CD14-positive monocyte (primary cell): ENCODE measurements at regions of chr12 and their contacts with region 1.

Region 1: DNA sequence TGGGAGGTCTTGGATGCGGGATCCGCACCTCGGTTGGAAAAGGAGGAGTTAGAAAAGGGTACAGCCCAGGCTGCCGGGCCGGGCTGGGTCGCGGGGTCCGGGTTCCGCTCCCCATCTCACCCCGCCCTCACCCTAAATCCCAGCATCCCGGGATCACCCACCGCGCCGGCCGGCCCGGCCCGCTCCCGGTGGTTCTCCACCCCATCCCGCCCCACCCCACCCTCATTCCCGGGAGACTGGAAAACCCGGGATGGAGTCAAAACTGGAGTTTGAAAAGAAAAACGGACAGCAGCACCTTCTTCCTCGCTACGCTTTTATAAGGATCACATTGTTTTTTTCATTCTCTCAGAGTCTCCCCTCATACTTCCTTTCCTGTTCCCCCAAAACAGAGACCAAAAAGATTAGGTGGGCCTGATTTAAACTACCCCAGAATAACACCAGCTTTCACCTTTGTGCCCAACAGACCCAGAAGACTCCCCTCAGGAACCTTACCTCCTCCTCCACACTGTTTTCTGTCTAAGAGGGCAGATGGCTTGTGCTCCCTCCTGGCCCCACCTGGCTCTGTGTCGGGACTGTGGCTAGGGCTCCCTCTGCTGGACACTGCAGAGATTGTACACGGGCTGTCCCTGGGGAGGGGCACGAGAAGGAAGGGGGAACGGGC is 2.8 kb downstream of the GLI1 start:
- DNase-seq: peak; percentile 70 to 77 (median 71)
- H3K4me3 ChIP-seq: peak overlapping the region; percentile 18 to 75 (median 44)
- H3K4me3 Mint-ChIP-seq: peak overlapping the region; percentile 78 to 97
- H3K27ac ChIP-seq: no peak overlapping the region
- H3K27ac Mint-ChIP-seq: peak overlapping the region in 5 of 7 donors; percentile 60 to 86 (median 72)
- H3K4me1 ChIP-seq: peaks cover 42 to 59% of the 10 kb centered on the region in 2 donors
- H3K4me1 Mint-ChIP-seq: peaks cover 57% of the 10 kb centered on the region
- H3K27me3 ChIP-seq: peaks cover 15 to 26% of the 10 kb centered on the region in 2 donors
- H3K27me3 Mint-ChIP-seq: peaks cover 44 to 57% (median 48%) of the 10 kb centered on the region in 3 donors
- CTCF ChIP-seq: peak; percentile 89

Region 2: GRCh38 chr12:56931474-56931978 is 530.9 kb before region 1 on chr12:
- intact Hi-C with region 1: loop called (anchors 2 to 5 kb)
- DNase-seq: peak; percentile 58 to 71 (median 67)
- H3K4me3 ChIP-seq: peak overlapping the region in 1 of 3 experiments; percentile 62
- H3K4me3 Mint-ChIP-seq: peak overlapping the region; percentile 55 to 71
- H3K27ac ChIP-seq: peak overlapping the region; percentile 56 to 73
- H3K27ac Mint-ChIP-seq: peak overlapping the region; percentile 80 to 93 (median 89)
- H3K4me1 ChIP-seq: peaks cover 33 to 45% of the 10 kb centered on the region in 2 donors
- H3K4me1 Mint-ChIP-seq: peaks cover 52% of the 10 kb centered on the region
- H3K27me3 ChIP-seq: no peaks in the 10 kb centered on the region
- H3K27me3 Mint-ChIP-seq: peaks cover 0 to 3% (median 2%) of the 10 kb centered on the region in 3 donors
- CTCF ChIP-seq: no peak

Region 3: GRCh38 chr12:57309420-57309819 is 153.0 kb before region 1 on chr12:
- intact Hi-C with region 1: loop called in 1 of 2 experiments (anchors 10 kb)
- DNase-seq: no peak
- H3K4me3 ChIP-seq: no peak overlapping the region
- H3K4me3 Mint-ChIP-seq: no peak overlapping the region
- H3K27ac ChIP-seq: no peak overlapping the region
- H3K27ac Mint-ChIP-seq: peak overlapping the region in 1 of 7 donors; percentile 74
- H3K4me1 ChIP-seq: no peaks in the 10 kb centered on the region
- H3K4me1 Mint-ChIP-seq: no peaks in the 10 kb centered on the region
- H3K27me3 ChIP-seq: no peaks in the 10 kb centered on the region
- H3K27me3 Mint-ChIP-seq: no peaks in the 10 kb centered on the region
- CTCF ChIP-seq: no peak

Region 4: GRCh38 chr12:57476162-57476992 is 14.0 kb after region 1 on chr12:
- intact Hi-C with region 1: no loop called
- DNase-seq: peak in 2 of 3 donors; percentile 34 to 44
- H3K4me3 ChIP-seq: peak overlapping the region; percentile 79 to 100 (median 86)
- H3K4me3 Mint-ChIP-seq: peak overlapping the region; percentile 97 to 99
- H3K27ac ChIP-seq: peak overlapping the region; percentile 62 to 83
- H3K27ac Mint-ChIP-seq: peak overlapping the region; percentile 86 to 97 (median 96)
- H3K4me1 ChIP-seq: peaks cover 55 to 79% of the 10 kb centered on the region in 2 donors
- H3K4me1 Mint-ChIP-seq: peaks cover 74% of the 10 kb centered on the region
- H3K27me3 ChIP-seq: no peaks in the 10 kb centered on the region
- H3K27me3 Mint-ChIP-seq: peaks cover 0 to 2% (median 0%) of the 10 kb centered on the region in 3 donors
- CTCF ChIP-seq: peak; percentile 90

Region 5: DNA sequence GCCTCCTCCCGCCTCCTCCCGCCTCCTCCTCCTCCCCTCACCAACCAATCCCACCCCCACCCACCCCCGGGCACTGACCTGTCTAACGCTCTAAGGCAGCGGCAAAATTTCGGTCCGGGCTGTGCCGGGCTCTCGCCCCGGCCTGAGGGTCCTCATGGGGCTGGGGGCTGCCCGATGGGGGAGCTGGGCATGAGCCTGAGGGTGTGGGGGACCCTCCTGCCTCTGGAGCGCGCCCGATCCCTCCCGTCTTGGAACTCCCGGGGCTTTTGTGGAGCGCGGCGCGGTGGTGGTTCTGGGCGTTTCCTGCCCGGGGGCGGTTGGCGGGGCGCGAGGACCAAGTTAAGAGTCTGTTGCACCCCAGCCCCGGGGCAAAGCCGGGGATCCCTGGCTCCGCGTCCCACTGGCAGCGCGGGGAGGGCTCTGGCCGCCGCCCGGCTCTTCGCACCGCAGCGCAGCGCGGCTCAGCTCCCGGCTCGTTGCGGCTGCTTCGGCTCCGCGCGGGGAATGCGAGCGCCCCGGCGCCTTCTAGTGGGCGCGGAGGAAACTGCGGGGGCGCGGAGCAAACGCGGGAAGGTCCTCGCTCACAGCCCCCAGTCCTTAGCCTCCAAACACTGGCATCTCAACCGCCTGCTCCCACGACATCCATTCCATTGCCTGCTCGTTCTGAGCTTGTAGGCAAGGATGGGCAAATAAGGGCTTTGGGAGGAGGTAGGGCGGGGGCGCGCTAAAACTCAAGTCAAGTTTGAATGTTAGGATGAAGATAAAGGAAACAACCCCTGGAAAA is 170.5 kb after region 1 on chr12 and contains the start of gene B4GALNT1:
- intact Hi-C with region 1: loop called in 1 of 2 experiments (anchors 5 kb)
- DNase-seq: peak; percentile 24 to 49 (median 44)
- H3K4me3 ChIP-seq: peak within 1 kb of the TSS; percentile 1 to 68 (median 23)
- H3K4me3 Mint-ChIP-seq: peak within 1 kb of the TSS; percentile 39 to 80
- H3K27ac ChIP-seq: no peak within 1 kb of the TSS
- H3K27ac Mint-ChIP-seq: no peak within 1 kb of the TSS
- H3K4me1 ChIP-seq: peaks cover 11 to 21% of the 10 kb centered on the region in 2 donors
- H3K4me1 Mint-ChIP-seq: peaks cover 11% of the 10 kb centered on the region
- H3K27me3 ChIP-seq: peaks cover 49 to 79% of the 10 kb centered on the region in 2 donors
- H3K27me3 Mint-ChIP-seq: peaks cover 59 to 75% (median 61%) of the 10 kb centered on the region in 3 donors
- CTCF ChIP-seq: peak; percentile 92
- polyA plus RNA-seq, gene B4GALNT1: not detected